Activated T-helper 2 cell treated with anti-CD3 and anti-CD28 coated beads, Interferon-gamma antibody, Interleukin-2, Interleukin-4, amounts not matched to agents 10 μg/mL and 5 μg/mL and 100 μg/mL, durations not matched to agents 14 hours and 24 hours and 36 hours (primary cell): ENCODE measurements at regions of chr18 and their contacts with region 1.

Region 1: DNA sequence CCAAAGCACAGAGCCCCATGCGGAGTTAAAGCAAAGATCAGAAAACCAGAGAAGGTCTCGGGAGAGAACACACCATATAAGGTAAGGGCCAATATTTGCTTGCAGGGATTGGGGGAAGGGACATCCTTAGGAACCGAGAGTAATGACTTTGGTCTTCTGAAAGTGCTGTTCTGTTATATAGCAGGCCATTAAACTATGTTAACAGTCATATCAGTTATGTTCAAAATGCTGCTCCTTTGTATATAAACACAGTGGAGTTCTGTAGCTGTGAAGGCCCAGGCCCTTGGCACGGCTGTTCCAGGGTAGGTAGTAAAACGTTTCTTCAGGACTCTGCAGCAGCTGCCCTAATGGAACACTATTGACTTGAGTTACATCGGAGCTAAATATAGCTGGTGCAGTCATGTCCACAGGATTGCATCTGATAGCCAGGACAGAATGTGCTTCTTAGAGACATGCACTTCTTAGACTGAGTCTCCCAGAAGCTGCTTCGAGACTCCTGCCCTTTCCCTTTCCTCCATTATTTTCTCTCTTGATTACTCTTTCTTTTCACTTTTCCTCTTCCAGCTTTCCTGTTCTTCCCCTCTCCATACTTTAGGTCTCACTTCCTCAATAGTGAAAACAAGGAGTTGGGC is 122.4 kb downstream of the SETBP1 start:
- DNase-seq: no peak
- H3K4me3 Mint-ChIP-seq: no peak overlapping the region
- H3K27ac Mint-ChIP-seq: no peak overlapping the region
- H3K4me1 Mint-ChIP-seq: peaks cover 61% of the 10 kb centered on the region
- H3K27me3 Mint-ChIP-seq: no peaks in the 10 kb centered on the region

Region 2: DNA sequence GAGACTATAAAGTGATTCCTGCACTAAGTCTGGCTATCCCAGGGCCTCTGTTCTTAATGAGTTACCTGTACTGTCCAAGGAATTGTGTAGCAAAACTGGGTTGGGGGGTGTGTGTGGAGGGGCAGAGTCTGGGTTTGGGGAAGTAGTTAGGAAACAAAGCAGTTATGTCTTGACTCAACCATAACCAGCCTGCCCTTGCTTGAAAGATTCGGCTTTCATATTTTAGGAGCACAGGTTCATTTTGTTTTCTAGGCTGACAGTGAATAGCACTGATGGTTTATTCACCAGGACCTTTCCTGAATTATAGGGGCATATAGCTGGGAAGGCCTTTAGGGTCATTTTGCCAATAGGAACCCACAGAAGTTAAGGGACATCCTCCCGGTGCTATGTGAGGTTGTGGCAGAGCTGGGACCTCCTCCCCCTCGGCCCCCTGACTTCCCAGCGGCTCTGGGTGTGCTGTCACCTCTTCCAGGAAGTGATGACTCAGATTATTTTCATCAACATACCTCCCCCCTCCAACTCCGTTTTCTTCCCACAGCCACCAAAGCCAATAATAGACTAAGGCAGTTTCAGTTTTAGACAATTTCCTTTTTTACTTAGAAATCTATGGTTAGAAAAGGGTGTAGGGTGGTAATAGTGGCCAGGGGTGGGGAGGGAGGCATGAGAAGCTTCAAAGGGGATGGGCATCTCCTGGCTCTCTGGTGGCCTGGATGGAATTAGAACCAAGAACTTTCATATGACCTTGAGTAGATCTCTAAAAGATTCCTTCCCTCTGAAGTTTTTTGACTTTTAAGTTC is 77.6 kb before region 1 on chr18:
- intact Hi-C with region 1: loop called (anchors 1 kb)
- DNase-seq: peak; percentile 66
- H3K4me3 Mint-ChIP-seq: peak overlapping the region; percentile 19
- H3K27ac Mint-ChIP-seq: peak overlapping the region; percentile 83
- H3K4me1 Mint-ChIP-seq: peaks cover 90% of the 10 kb centered on the region
- H3K27me3 Mint-ChIP-seq: no peaks in the 10 kb centered on the region

Region 3: GRCh38 chr18:44773640-44774155 is 29.4 kb before region 1 on chr18:
- intact Hi-C with region 1: loop called (anchors 2 kb)
- DNase-seq: no peak
- H3K4me3 Mint-ChIP-seq: no peak overlapping the region
- H3K27ac Mint-ChIP-seq: peak overlapping the region; percentile 18
- H3K4me1 Mint-ChIP-seq: peaks cover 42% of the 10 kb centered on the region
- H3K27me3 Mint-ChIP-seq: peaks cover 1% of the 10 kb centered on the region

Region 4: GRCh38 chr18:44887227-44887631 is 84.1 kb after region 1 on chr18:
- intact Hi-C with region 1: loop called (anchors 1 kb)
- DNase-seq: peak; percentile 11
- H3K4me3 Mint-ChIP-seq: peak overlapping the region; percentile 57
- H3K27ac Mint-ChIP-seq: peak overlapping the region; percentile 99
- H3K4me1 Mint-ChIP-seq: peaks cover 35% of the 10 kb centered on the region
- H3K27me3 Mint-ChIP-seq: no peaks in the 10 kb centered on the region